Activated B cell treated with CpG ODN at 0.5 μM for 24 hours (primary cell): ENCODE measurements at regions of chr3 and their contacts with region 1.

Region 1: GRCh38 chr3:115692887-115693524 is 69.7 kb downstream of the GAP43 start:
- DNase-seq: peak; percentile 28
- ATAC-seq: peak; percentile 95
- H3K4me3 Mint-ChIP-seq: no peak overlapping the region
- H3K27ac Mint-ChIP-seq: no peak overlapping the region
- H3K4me1 Mint-ChIP-seq: peaks cover 3% of the 10 kb centered on the region
- H3K27me3 Mint-ChIP-seq: no peaks in the 10 kb centered on the region
- CTCF ChIP-seq: no peak

Region 2: GRCh38 chr3:115040673-115041286 is 652.2 kb before region 1 on chr3:
- CTCF ChIA-PET with region 1: interaction called, 5 read pairs
- POLR2A ChIA-PET with region 1: no interaction called
- intact Hi-C with region 1: loop called (anchors 1 kb)
- DNase-seq: no peak
- ATAC-seq: no peak
- H3K4me3 Mint-ChIP-seq: no peak overlapping the region
- H3K27ac Mint-ChIP-seq: no peak overlapping the region
- H3K4me1 Mint-ChIP-seq: no peaks in the 10 kb centered on the region
- H3K27me3 Mint-ChIP-seq: no peaks in the 10 kb centered on the region
- CTCF ChIP-seq: peak; percentile 24

Region 3: DNA sequence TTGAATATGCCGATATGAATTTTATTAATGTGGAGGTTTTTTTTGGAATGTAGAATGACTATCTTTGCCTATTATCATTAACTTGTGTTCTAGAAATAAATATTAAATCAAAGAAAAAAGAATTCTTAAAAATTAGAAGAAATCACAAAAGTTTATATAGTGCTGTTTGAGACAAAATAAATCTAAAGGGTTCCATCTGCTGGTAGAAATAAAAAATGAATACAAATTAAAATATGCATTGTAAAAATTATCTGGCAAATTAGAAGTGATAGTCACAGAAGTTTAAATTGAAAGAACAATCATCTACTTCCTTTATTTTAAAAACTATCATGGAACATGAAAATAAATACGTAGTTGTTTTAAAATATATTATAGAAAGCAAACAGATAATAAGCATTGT is 523.2 kb before region 1 on chr3:
- CTCF ChIA-PET with region 1: no interaction called
- POLR2A ChIA-PET with region 1: no interaction called
- intact Hi-C with region 1: loop called (anchors 2 kb)
- DNase-seq: no peak
- ATAC-seq: no peak
- H3K4me3 Mint-ChIP-seq: no peak overlapping the region
- H3K27ac Mint-ChIP-seq: no peak overlapping the region
- H3K4me1 Mint-ChIP-seq: peaks cover 7% of the 10 kb centered on the region
- H3K27me3 Mint-ChIP-seq: no peaks in the 10 kb centered on the region
- CTCF ChIP-seq: no peak

Region 4: GRCh38 chr3:115363071-115363470 is 329.9 kb before region 1 on chr3:
- CTCF ChIA-PET with region 1: no interaction called
- POLR2A ChIA-PET with region 1: no interaction called
- intact Hi-C with region 1: loop called (anchors 10 kb)
- DNase-seq: no peak
- ATAC-seq: no peak
- H3K4me3 Mint-ChIP-seq: no peak overlapping the region
- H3K27ac Mint-ChIP-seq: no peak overlapping the region
- H3K4me1 Mint-ChIP-seq: peaks cover 4% of the 10 kb centered on the region
- H3K27me3 Mint-ChIP-seq: no peaks in the 10 kb centered on the region
- CTCF ChIP-seq: no peak